ENCODE measurements at regions of chr4 and their contacts with region 1.

Region 1: GRCh38 chr4:7101692-7102515 is 34.0 kb upstream of the GRPEL1 start:
- DNase-seq: no peak
- H3K4me3 ChIP-seq: peak overlapping the region; percentile 43
- CTCF ChIP-seq: peak; percentile 84

Region 2: GRCh38 chr4:6538575-6538974 is 563.3 kb before region 1 on chr4:
- CTCF ChIA-PET with region 1: no interaction called
- POLR2A ChIA-PET with region 1: no interaction called
- DNase-seq: no peak
- H3K4me3 ChIP-seq: no peak overlapping the region
- CTCF ChIP-seq: no peak

Region 3: DNA sequence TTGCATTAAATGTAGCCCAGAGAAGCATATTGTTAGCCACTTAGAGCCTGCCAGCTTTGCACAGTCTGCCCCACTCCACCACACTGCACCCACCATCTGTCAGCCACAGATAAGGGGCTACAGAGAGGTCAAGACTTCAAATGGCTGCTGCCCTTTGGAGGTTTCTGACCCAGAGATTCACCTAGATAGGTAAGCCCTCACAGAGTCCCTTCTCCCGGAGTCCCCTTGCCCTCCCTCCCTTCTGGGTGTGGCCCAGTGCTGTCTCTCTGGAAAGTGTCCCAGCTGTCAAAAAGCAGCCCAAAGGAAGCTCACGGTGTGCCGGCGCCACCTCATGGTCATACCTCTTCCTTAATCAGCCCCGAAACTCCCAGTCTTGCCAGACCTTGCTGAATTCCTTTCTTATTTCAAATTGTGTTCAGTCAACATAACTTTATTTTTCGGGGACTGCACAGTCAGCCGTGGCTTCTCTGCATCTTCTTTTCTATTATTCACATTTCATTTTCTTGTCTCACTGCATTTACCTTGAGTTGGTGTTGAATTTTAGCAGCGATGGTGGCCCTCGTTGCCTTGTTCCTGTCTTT is 19.9 kb before region 1 on chr4:
- CTCF ChIA-PET with region 1: interaction called, 70 read pairs
- POLR2A ChIA-PET with region 1: no interaction called
- DNase-seq: no peak
- H3K4me3 ChIP-seq: no peak overlapping the region
- CTCF ChIP-seq: peak; percentile 41

Region 4: DNA sequence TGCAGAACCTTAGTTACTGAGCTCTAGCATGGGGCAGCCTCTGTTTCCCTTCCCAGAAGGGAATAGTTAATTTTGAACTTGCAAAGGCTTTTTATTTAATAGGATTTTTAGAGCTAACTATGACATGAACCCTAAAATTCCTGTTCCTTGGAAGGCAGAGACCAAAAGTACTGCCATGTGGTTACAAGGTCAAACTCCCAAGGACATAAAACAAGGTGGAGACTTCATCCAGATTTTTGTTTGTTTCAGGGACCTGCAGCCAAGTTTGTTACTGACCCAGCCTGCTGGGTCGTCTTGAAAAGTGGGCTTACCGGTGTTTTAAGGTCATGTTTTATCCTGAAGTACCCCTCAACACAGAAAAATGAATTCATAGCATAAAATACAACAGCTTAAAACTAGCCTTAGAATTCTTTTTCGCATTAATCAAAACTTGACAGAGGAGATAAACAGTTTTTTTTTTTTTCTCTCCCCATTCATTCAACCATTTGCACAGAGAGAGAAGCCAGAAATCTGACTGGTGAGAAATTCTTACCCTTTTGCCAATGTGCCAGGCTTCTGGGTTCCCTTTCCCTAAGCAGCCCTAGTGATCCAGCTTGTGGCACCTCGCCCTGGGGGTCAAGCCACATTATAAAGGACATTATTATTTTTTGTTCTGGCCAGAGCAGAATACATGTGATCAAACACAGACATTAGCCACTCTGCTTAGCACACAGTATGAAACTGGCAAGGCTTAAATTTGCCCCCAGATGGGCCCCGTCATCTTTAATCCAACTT is 12.5 kb before region 1 on chr4:
- CTCF ChIA-PET with region 1: interaction called, 70 read pairs
- POLR2A ChIA-PET with region 1: no interaction called
- DNase-seq: no peak
- H3K4me3 ChIP-seq: no peak overlapping the region
- CTCF ChIP-seq: no peak

Region 5: GRCh38 chr4:7115557-7116340 is 13.8 kb after region 1 on chr4:
- CTCF ChIA-PET with region 1: interaction called, 12 read pairs
- POLR2A ChIA-PET with region 1: no interaction called
- DNase-seq: no peak
- H3K4me3 ChIP-seq: no peak overlapping the region
- CTCF ChIP-seq: no peak

Region 6: GRCh38 chr4:7134737-7135388 is 33.0 kb after region 1 on chr4:
- CTCF ChIA-PET with region 1: interaction called, 13 read pairs
- POLR2A ChIA-PET with region 1: no interaction called
- DNase-seq: peak; percentile 57
- H3K4me3 ChIP-seq: peak overlapping the region; percentile 8; the same call in 1 of the 2 replicates
- CTCF ChIP-seq: no peak

Region 7: GRCh38 chr4:7423801-7424552 is 322.1 kb after region 1 on chr4:
- CTCF ChIA-PET with region 1: no interaction called
- POLR2A ChIA-PET with region 1: no interaction called
- DNase-seq: no peak
- H3K4me3 ChIP-seq: no peak overlapping the region
- CTCF ChIP-seq: no peak

Measured in AG04449 (cell line).